Activated T-helper 1 cell treated with anti-CD3 and anti-CD28 coated beads, Interleukin-12 subunit alpha, Interleukin-12 subunit beta, Interleukin-2, Interleukin-4 antibody, amounts not matched to agents 30 ng/mL and 10 ng/mL and 1 ng/mL, durations not matched to agents 14 hours and 24 hours and 36 hours (primary cell): ENCODE measurements at regions of chr10 and their contacts with region 1.

Region 1: DNA sequence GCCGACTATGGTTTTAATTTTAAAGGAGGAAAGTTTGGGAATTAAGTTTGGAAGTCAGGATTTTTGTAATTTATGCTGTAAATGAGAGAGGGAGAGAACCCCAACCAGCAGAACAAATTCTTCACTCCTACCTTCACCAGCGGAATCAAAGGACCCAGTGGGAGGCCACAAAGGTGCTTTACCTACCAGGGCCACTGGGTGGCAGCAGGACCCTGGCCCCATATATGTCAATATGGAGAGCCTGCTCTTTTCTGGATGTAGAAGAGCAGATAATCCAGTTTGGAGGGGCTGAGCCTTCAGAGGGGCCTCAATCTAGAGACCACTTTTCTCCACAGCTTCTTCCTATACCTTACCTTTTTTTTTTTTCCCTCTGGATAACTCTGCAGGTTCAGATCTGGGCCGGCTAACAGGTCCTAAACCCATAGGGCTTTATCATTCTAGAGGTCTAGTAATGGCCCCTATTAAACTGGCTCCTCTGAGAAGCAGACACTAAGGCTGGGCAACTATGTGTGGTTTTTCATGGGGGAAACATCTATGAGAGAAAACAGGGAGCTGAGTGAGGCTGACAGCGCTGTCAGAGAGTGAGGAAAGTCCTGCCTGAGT is 8.5 kb upstream of the SCD start:
- DNase-seq: peak; percentile 67
- H3K4me3 Mint-ChIP-seq: no peak overlapping the region
- H3K27ac Mint-ChIP-seq: no peak overlapping the region
- H3K4me1 Mint-ChIP-seq: peaks cover 35% of the 10 kb centered on the region
- H3K27me3 Mint-ChIP-seq: peaks cover 17% of the 10 kb centered on the region

Region 2: DNA sequence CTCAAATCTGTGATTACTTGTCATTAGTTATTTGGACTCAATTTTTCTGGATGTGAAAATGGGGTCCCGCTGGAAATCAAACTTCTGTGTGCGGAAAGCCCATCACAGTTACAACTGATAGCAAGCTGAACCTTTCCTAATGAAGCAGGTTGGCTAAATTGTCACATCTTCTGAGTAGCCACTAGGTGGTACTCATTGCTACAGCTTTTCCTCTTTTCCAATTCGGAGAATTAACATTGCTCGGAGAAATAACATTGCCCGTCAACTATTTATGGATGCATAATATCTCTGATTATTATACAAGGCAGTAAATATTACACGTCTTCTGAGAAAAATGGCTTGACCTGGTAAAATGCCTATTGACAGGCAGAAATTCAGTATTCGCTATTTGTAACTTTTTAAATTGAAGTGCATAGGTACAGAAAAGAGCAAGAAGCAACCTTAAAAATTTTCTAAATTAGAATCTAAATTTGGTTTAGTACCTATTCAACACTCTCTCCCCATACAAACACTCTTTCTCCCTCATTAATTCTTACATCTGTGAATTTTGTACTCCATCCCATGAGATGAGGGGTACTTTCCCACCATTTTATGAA is 34.7 kb before region 1 on chr10:
- intact Hi-C with region 1: loop called (anchors 1 kb)
- DNase-seq: no peak
- H3K4me3 Mint-ChIP-seq: no peak overlapping the region
- H3K27ac Mint-ChIP-seq: no peak overlapping the region
- H3K4me1 Mint-ChIP-seq: no peaks in the 10 kb centered on the region
- H3K27me3 Mint-ChIP-seq: peaks cover 40% of the 10 kb centered on the region